Endothelial cell of umbilical vein (primary cell): ENCODE measurements at regions of chr11 and their contacts with region 1.

Region 1: DNA sequence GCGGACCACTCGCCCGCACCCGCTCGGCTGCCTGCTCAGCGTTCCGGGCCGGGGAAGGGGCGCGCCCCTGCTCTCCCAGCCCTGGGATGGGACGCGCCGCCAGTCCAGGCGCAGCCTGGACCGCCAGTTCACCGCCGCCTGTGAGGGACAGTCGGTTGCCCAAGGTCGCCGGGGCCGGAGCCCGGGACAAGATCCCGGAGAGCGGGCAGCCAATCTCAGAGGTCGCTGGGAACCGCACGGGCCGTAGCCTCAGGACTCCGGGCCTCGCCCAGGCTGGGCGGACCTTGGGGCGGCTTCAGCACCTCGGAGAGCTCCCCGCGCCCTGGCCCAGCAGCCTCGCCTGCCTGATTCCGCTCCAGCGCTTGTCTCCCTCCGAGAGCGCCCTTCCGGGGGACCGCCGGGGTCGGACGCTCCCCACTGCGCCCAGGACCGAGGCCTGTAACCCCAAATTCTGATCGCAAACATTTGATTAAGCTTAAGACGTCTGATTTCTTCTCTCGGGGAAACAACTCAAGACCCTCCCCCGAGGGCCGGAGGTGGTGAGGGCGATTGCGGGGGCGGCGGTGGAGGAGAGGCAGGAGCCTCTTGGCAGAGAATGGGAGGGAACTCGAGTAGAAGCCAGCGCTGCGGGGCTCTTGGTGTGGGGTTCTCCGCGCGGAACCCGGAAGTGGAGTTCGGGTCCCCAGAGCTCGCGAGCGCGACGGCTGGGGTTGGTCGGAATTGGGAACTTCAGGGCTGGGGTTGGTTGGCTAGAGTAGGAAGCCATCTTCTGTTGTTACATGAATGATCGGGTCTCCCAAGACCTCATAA is 1.1 kb upstream of the CHRM4 start:
- DNase-seq: peak; percentile 71
- H3K4me3 ChIP-seq: peak overlapping the region in 1 of 3 experiments; percentile 36
- H3K27ac ChIP-seq: no peak overlapping the region
- H3K4me1 ChIP-seq: peaks cover 3% of the 10 kb centered on the region
- H3K27me3 ChIP-seq: peaks cover 21 to 34% of the 10 kb centered on the region in 2 experiments
- CTCF ChIP-seq: no peak
- POLR2A ChIP-seq: no peak

Region 2: GRCh38 chr11:46272816-46273427 is 119.7 kb before region 1 on chr11:
- CTCF ChIA-PET with region 1: no interaction called
- POLR2A ChIA-PET with region 1: no interaction called
- dilution Hi-C with region 1: no loop called
- intact Hi-C with region 1: no loop called
- DNase-seq: peak; percentile 43
- H3K4me3 ChIP-seq: no peak overlapping the region
- H3K27ac ChIP-seq: no peak overlapping the region
- H3K4me1 ChIP-seq: peaks cover 10% of the 10 kb centered on the region
- H3K27me3 ChIP-seq: peaks cover 9 to 10% of the 10 kb centered on the region in 2 experiments
- CTCF ChIP-seq: no peak
- POLR2A ChIP-seq: no peak

Region 3: DNA sequence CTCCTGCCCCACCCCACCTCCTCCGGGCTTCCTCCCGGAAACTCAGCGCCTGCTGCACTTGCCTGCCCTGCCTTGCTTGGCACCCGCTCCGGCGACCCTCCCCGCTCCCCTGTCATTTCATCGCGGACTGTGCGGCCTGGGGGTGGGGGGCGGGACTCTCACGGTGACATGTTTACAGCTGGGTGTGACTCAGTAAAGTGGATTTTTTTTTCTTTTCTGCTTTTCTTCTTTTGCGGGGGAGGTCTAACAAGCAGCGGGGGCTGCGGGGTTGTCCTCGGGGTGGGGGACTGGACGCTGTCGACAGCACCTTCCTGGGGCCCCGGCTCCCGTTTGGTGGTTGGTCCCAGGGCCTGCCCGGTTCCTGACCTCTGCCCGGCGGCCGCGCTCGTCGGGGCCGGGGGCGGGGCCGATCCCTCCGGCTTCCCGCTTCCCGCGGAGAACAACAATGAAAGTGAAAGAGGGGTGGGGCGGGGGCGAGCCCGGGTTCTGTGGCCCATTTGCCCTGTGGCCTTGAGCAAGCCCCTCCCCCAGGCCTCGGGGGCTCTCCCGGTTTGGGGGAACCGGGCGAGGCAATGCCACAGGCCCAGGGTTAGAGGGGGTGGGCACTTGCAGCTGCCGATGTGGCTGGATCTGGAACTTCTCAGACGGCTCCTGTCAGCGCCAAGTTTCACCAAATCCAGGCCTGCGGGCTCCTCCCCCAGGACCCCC is 12.1 kb before region 1 on chr11:
- CTCF ChIA-PET with region 1: interaction called, 27 read pairs
- POLR2A ChIA-PET with region 1: interaction called, 5 read pairs
- dilution Hi-C with region 1: no loop called
- intact Hi-C with region 1: loop called (anchors 1 kb)
- DNase-seq: peak; percentile 67
- H3K4me3 ChIP-seq: peak overlapping the region; percentile 62 to 84 (median 72)
- H3K27ac ChIP-seq: peak overlapping the region; percentile 61
- H3K4me1 ChIP-seq: peaks cover 11% of the 10 kb centered on the region
- H3K27me3 ChIP-seq: no peaks in the 10 kb centered on the region
- CTCF ChIP-seq: no peak
- POLR2A ChIP-seq: no peak

Region 4: DNA sequence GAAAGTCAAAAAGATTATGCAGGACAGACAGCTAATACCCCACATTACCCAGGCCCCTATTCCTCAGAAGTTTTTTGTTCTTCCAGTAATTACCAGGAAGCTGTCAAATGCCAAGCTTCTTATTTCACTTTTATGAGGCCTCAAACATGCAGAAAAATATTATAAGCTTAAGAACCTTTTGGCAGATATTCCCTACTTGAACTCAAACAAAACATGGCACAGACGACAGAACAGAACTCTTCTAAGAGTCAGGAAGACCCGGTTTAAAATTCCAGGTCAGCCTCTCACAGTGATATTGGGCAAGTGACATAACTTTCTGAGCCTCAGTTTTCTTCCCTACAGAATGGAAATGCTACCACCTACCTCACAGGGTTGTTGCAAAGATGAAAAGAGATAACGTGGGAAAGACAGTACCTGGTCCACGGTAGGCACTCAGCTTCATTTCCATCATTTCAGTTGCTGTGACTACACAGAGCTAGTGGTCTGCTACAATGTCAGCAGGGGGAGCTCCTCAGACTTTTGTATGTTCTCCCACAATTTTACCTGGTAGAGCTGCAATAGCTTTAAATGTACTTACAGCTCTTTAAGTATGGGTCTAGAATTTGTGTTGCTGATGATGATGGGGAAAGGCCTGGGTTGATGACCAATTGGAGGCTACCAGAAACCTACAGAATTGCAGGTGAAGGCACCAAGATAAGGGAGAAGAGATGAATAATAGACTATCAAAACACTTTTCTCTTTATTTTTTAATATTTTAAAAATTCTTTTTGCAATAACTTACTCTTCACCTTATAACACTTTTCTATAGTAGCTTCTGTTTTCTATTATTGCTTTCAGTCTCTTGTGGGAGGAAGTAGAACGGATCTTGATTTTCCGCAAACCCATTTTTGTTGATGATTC is 97.3 kb after region 1 on chr11:
- CTCF ChIA-PET with region 1: interaction called, 23 read pairs
- POLR2A ChIA-PET with region 1: no interaction called
- dilution Hi-C with region 1: no loop called
- intact Hi-C with region 1: no loop called
- DNase-seq: peak; percentile 62
- H3K4me3 ChIP-seq: no peak overlapping the region
- H3K27ac ChIP-seq: no peak overlapping the region
- H3K4me1 ChIP-seq: peaks cover 27% of the 10 kb centered on the region
- H3K27me3 ChIP-seq: no peaks in the 10 kb centered on the region
- CTCF ChIP-seq: peak; percentile 66 to 68
- POLR2A ChIP-seq: no peak

Region 5: GRCh38 chr11:46537537-46538295 is 145.1 kb after region 1 on chr11:
- CTCF ChIA-PET with region 1: interaction called, 99 read pairs
- POLR2A ChIA-PET with region 1: no interaction called
- dilution Hi-C with region 1: no loop called
- intact Hi-C with region 1: loop called (anchors 1 kb)
- DNase-seq: peak; percentile 75
- H3K4me3 ChIP-seq: no peak overlapping the region
- H3K27ac ChIP-seq: no peak overlapping the region
- H3K4me1 ChIP-seq: no peaks in the 10 kb centered on the region
- H3K27me3 ChIP-seq: no peaks in the 10 kb centered on the region
- CTCF ChIP-seq: peak; percentile 88 to 91
- POLR2A ChIP-seq: no peak

Region 6: GRCh38 chr11:46700241-46701077 is 307.8 kb after region 1 on chr11 and contains the starts of genes ARHGAP1 and ZNF408:
- CTCF ChIA-PET with region 1: interaction called, 4 read pairs
- POLR2A ChIA-PET with region 1: no interaction called
- dilution Hi-C with region 1: no loop called
- intact Hi-C with region 1: loop called (anchors 2 kb)
- DNase-seq: peak; percentile 98
- H3K4me3 ChIP-seq: peak within 1 kb of the TSS; percentile 70 to 87 (median 79)
- H3K27ac ChIP-seq: peak within 1 kb of the TSS; percentile 89
- H3K4me1 ChIP-seq: peaks cover 5% of the 10 kb centered on the region
- H3K27me3 ChIP-seq: no peaks in the 10 kb centered on the region
- CTCF ChIP-seq: no peak
- POLR2A ChIP-seq: peak; percentile 94
- total RNA-seq, gene ARHGAP1: 58.2 and 63.4 TPM in 2 replicates
- total RNA-seq, gene ZNF408: 10.3 and 10.9 TPM in 2 replicates

Region 7: GRCh38 chr11:46948378-46949131 is 555.9 kb after region 1 on chr11:
- CTCF ChIA-PET with region 1: no interaction called
- POLR2A ChIA-PET with region 1: no interaction called
- dilution Hi-C with region 1: no loop called
- intact Hi-C with region 1: no loop called
- DNase-seq: peak; percentile 11
- H3K4me3 ChIP-seq: no peak overlapping the region
- H3K27ac ChIP-seq: no peak overlapping the region
- H3K4me1 ChIP-seq: peaks cover 13% of the 10 kb centered on the region
- H3K27me3 ChIP-seq: no peaks in the 10 kb centered on the region
- CTCF ChIP-seq: no peak
- POLR2A ChIP-seq: no peak